Activated T-helper 2 cell treated with anti-CD3 and anti-CD28 coated beads, Interferon-gamma antibody, Interleukin-2, Interleukin-4, amounts not matched to agents 10 μg/mL and 5 μg/mL and 100 μg/mL, durations not matched to agents 14 hours and 24 hours and 36 hours (primary cell): ENCODE measurements at regions of chr7 and their contacts with region 1.

Region 1: GRCh38 chr7:114832906-114833595 is 88.8 kb upstream of the MDFIC start:
- DNase-seq: no peak
- H3K4me3 Mint-ChIP-seq: peak overlapping the region; percentile 56
- H3K27ac Mint-ChIP-seq: peak overlapping the region; percentile 98
- H3K4me1 Mint-ChIP-seq: peaks cover 46% of the 10 kb centered on the region
- H3K27me3 Mint-ChIP-seq: no peaks in the 10 kb centered on the region

Region 2: DNA sequence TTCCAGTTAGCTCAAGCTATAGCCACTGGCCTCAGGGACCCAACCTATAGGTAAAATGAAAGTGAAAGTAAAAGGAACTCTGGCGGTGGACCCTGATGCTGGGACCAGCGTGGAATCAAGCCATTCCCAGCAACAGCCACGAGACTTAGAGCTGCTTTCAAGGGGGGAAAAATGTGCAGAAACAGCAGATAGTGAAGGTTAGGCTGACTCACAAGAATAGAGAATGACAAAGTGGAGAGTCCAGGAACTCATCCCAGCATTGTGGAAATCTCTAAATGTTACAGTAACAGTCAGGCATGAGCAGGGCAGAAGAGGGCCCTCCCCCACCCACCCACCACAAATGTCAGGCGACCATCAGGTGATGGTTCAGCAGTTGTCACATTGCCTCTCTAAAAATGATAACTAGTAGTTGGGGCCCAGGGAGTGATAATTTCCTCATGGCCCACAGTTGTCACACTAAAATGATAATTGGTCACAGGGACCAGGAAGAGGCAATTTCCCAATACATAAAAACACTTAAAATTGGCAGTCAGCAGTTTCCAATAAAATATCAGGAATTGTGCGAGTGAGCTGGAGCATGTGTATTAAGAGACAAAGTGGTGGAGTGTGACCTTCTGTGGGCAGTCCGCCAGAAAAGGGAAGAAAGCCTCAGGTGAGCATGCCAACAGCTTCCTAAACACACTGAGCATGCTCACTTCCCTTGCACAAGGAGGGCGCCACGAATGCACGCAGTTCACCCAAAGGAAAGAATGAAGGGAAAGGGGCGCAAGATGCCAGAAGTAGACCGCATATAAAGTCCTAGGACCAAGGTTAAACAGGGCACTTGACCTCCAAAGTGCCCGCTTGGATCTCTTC is 784.4 kb before region 1 on chr7:
- intact Hi-C with region 1: loop called (anchors 10 kb)
- DNase-seq: no peak
- H3K4me3 Mint-ChIP-seq: peak overlapping the region; percentile 43
- H3K27ac Mint-ChIP-seq: peak overlapping the region; percentile 57
- H3K4me1 Mint-ChIP-seq: peaks cover 7% of the 10 kb centered on the region
- H3K27me3 Mint-ChIP-seq: no peaks in the 10 kb centered on the region

Region 3: GRCh38 chr7:114639451-114639850 is 193.6 kb before region 1 on chr7:
- intact Hi-C with region 1: no loop called
- DNase-seq: no peak
- H3K4me3 Mint-ChIP-seq: no peak overlapping the region
- H3K27ac Mint-ChIP-seq: no peak overlapping the region
- H3K4me1 Mint-ChIP-seq: no peaks in the 10 kb centered on the region
- H3K27me3 Mint-ChIP-seq: peaks cover 2% of the 10 kb centered on the region

Region 4: GRCh38 chr7:114777288-114777687 is 55.8 kb before region 1 on chr7:
- intact Hi-C with region 1: no loop called
- DNase-seq: no peak
- H3K4me3 Mint-ChIP-seq: no peak overlapping the region
- H3K27ac Mint-ChIP-seq: no peak overlapping the region
- H3K4me1 Mint-ChIP-seq: peaks cover 22% of the 10 kb centered on the region
- H3K27me3 Mint-ChIP-seq: peaks cover 1% of the 10 kb centered on the region

Region 5: GRCh38 chr7:114789871-114790311 is 43.2 kb before region 1 on chr7:
- intact Hi-C with region 1: loop called (anchors 1 kb)
- DNase-seq: no peak
- H3K4me3 Mint-ChIP-seq: no peak overlapping the region
- H3K27ac Mint-ChIP-seq: peak overlapping the region; percentile 85
- H3K4me1 Mint-ChIP-seq: peaks cover 62% of the 10 kb centered on the region
- H3K27me3 Mint-ChIP-seq: no peaks in the 10 kb centered on the region

Region 6: DNA sequence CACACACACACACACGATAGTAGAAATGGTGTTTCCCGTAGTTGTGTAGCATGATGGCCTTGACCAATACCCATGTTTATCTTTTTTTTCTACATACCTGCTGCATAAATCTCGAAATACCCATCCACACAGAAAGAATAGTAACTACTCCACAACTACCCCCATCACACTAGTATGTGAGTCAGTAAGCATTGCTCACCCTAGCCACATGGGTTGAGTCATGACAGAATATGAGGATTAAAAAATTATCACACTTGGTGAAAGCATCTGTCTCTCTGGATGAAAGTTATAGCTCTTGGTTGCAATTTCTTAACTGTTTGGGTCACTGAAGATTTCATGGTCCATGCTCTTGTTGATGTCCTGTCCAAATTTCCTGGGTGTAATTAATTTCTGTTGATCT is 14.6 kb before region 1 on chr7:
- intact Hi-C with region 1: loop called (anchors 1 kb)
- DNase-seq: no peak
- H3K4me3 Mint-ChIP-seq: no peak overlapping the region
- H3K27ac Mint-ChIP-seq: peak overlapping the region; percentile 13
- H3K4me1 Mint-ChIP-seq: peaks cover 39% of the 10 kb centered on the region
- H3K27me3 Mint-ChIP-seq: no peaks in the 10 kb centered on the region

Region 7: DNA sequence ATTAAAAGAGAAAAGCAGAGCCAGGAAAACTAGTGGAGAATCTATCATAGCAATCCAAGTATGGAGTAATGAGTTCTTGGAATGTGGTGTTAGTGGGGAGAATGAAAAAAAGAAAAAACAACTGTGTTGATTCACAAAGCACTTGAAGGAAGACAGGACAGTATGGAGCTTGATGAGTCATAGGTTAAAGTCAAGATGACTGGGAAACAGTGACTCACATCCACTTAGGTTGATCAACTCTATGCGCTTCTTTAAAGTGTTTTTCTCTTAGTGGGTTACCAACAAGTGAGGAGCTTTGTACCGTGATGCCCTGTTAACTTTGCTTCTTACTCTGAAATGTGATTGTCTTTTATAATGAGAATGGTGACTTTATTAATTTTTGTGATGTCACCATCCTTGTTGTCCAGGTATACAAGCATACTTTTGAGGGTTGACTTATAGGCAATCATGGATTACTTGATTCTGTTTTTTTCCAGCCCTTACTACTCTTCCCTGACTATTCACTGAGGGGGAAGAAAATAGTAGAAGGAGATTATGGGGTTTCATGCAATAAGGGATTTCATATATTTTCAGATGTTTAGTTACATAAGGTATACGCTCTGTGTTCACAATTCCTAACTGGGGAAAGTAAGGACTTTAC is 56.7 kb after region 1 on chr7:
- intact Hi-C with region 1: loop called (anchors 2 kb)
- DNase-seq: no peak
- H3K4me3 Mint-ChIP-seq: no peak overlapping the region
- H3K27ac Mint-ChIP-seq: peak overlapping the region; percentile 84
- H3K4me1 Mint-ChIP-seq: peaks cover 40% of the 10 kb centered on the region
- H3K27me3 Mint-ChIP-seq: no peaks in the 10 kb centered on the region

Region 8: DNA sequence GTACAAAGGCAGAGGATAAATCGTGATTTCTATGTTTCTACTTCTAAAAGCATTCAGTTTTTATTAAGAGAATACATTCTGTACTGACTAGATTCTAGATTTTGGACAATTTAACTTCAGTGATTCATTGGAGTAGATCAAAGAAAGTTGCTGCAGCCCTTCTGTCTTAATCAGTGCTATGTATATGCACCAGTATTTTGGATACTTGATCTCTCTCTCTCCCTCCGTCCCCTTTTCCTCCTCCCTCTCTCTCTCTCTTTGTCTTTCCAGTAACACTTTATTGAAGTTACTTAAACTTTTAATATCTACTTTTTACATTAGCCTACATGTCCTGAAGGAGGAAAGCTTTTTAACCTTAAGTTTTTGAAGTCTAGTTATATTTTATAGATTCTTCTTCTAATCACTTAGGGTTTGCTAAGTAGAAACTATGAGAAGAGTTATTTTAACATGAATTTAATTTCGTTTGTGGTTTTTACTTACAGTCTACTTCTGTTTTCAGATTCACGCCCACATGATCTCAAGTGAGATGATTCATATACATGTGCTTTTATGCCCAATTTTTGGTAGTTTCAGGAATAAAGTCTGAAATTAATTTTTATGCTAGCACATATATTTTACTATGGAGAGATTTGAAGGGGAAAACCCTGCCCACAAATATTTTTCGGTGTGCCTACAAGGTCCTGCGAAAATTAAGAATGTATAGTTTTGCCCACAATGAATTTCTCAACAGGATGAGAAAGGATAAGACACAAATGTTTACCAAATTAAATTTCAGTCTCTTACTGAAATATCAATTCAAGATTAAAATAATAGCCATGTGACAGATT is 98.0 kb after region 1 on chr7:
- intact Hi-C with region 1: loop called (anchors 1 kb)
- DNase-seq: no peak
- H3K4me3 Mint-ChIP-seq: peak overlapping the region; percentile 79
- H3K27ac Mint-ChIP-seq: no peak overlapping the region
- H3K4me1 Mint-ChIP-seq: peaks cover 25% of the 10 kb centered on the region
- H3K27me3 Mint-ChIP-seq: no peaks in the 10 kb centered on the region

Region 9: GRCh38 chr7:116399819-116400218 is 1566.8 kb after region 1 on chr7:
- intact Hi-C with region 1: no loop called
- DNase-seq: no peak
- H3K4me3 Mint-ChIP-seq: no peak overlapping the region
- H3K27ac Mint-ChIP-seq: no peak overlapping the region
- H3K4me1 Mint-ChIP-seq: no peaks in the 10 kb centered on the region
- H3K27me3 Mint-ChIP-seq: peaks cover 9% of the 10 kb centered on the region